Posterior cingulate gyrus (tissue), 11 donors: ENCODE measurements at regions of chr5 and their contacts with region 1.

Region 1: DNA sequence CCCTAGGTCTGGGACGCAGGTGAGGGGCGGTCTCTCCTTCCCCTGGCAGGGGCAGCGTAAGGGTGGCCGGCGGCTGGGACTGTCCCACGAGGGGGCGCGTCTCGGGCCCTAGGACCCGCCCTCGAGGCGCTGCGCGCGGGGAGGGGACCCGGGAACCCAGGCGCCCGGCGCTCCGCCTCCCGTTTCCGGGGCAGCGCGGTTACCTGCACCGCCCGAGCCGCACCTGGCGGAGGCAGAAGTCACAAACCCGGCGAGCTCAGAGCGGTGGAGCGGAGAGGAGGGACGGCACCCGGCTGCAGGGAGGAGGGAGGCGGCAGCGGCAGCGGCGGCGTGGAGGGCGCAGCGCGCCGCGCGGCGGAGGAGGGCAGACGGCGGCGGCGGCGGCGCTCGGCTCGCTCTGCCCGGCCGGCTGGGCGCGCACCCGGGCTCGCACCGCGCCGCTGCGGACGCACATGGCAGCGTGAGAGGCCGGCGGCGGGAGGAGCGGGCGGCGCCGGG is at the start of gene WWC1:
- DNase-seq: peak in 9 of 10 donors; percentile 44 to 93 (median 61)

Region 2: DNA sequence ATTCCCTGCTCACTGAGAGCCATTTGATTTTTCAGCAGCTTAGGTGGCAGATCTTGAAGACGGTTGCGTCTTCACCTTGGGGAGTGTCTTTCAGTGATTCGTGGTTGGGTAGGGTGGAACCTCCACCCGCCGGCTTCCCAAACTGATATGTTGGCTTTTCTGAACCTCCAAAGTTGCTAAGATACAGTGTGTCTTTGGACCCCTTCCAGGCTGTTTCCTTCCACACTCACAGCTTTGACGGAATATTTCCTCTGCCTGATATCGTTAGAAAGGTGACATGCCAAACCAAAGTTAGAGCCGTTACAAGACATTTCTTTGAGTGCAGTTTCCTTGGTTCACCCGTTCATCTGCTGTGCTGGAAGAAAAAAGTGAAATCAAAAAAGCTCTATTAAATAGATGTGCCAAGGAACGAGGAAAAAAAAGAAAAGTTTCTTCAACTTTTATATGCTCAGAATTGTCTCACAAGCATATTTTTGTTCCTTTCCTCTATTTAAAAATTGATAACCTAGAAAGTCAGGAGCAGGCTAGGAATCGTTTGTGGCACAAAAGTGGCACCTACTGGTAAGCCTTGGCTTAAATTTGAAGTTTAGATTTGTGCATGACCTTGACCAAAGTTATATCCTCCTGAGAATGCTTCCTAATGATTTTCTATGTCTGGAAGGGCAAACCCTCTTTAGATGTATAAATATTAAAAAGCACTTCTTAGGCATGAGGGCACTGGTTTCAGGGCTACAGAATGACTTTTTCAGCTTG is 270.8 kb before region 1 on chr5:
- intact Hi-C with region 1: no loop called
- DNase-seq: no peak

Region 3: GRCh38 chr5:168409580-168410458 is 118.3 kb after region 1 on chr5:
- intact Hi-C with region 1: loop called (anchors 10 kb)
- DNase-seq: peak in 6 of 10 donors; percentile 37 to 93 (median 51)